ENCODE measurements at regions of chr16 and their contacts with region 1.

Region 1: DNA sequence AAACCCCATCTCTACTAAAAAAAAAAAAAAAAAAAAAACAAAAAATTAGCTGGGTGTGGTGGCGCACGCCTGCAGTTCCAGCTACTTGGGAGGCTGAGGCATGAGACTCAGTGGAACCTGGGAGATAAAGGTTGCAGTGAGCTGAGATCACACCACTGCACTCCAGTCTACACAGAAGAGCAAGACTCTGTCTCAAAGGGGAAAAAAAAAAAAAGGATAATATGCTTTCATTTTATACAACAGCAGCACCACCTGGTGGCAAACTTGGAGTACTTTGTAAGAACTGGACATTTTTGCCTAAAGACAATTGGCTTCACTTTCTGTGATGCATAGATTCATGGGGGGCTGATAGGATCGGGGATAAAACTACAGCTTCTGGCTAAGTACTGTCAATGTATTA is 8.5 kb downstream of the CHTF8 start:
- DNase-seq: no peak
- H3K4me3 ChIP-seq: no peak overlapping the region
- H3K27me3 ChIP-seq: no peaks in the 10 kb centered on the region
- CTCF ChIP-seq: peak; percentile 56

Region 2: GRCh38 chr16:68528686-68529379 is 595.1 kb before region 1 on chr16:
- CTCF ChIA-PET with region 1: interaction called, 19 read pairs
- POLR2A ChIA-PET with region 1: no interaction called
- DNase-seq: no peak
- H3K4me3 ChIP-seq: peak overlapping the region; percentile 19; the same call in 1 of the 2 replicates
- H3K27me3 ChIP-seq: no peaks in the 10 kb centered on the region
- CTCF ChIP-seq: peak; percentile 97

Region 3: DNA sequence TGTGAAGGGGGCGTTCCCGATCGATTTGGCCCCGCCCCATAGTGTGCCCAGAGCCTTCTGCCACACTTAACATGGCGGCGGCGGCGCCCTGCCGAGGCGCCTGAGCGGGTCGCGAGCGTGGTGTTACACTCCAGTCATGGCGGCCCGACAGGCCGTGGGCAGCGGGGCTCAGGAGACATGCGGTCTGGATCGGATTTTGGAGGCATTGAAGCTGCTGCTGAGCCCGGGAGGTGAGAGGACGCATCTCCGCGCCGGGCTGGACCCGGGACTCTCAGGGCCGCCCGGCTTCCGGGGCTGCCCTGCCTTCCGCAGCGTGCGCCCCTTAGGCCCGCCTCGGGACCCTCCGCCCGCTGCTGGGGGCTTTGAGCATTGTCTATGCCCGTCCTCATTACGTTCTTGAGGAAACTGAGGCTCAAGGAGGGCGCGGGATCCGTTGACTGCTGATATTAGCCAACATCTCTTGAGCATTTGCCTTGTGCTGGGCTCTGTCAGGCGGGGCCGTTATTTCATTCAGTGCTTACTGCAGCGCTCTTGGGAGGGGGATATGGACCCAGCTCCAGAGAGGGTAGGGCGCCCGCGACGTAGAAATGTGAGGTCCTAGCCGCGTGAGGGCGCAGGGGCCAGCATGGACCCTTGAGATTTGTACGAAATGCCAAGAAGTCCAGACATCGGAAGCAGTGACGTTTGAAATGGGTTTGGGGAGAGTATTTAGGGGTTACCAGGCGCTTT is 280.3 kb before region 1 on chr16 and contains the start of gene TANGO6:
- CTCF ChIA-PET with region 1: interaction called, 48 read pairs
- POLR2A ChIA-PET with region 1: no interaction called
- DNase-seq: peak; percentile 11
- H3K4me3 ChIP-seq: peak within 1 kb of the TSS; percentile 65
- H3K27me3 ChIP-seq: no peaks in the 10 kb centered on the region
- CTCF ChIP-seq: peak; percentile 47
- polyA plus RNA-seq, gene TANGO6: 13.0 and 14.6 TPM in 2 replicates

Region 4: GRCh38 chr16:68902008-68902968 is 221.6 kb before region 1 on chr16:
- CTCF ChIA-PET with region 1: interaction called, 146 read pairs
- POLR2A ChIA-PET with region 1: no interaction called
- DNase-seq: peak; percentile 25
- H3K4me3 ChIP-seq: no peak overlapping the region
- H3K27me3 ChIP-seq: no peaks in the 10 kb centered on the region
- CTCF ChIP-seq: peak; percentile 74

Region 5: DNA sequence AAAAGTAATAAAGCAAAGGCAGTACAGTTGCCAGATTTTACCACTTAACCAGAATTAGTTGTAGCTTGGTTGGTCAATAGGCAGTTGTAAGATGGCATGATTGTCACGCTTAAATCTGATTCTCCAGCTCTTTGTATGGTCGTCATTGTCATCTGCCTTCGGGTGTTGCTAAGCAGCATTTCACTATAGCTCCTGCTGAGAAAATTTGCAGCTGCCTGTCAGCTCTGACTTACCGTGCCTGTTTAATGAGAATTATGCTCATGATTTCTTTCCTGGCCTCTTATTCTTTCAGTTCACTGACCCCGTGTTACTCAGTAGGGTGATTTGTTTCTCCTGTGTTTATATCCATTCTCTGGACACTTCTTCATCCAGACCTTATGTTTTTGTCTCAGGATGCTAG is 213.9 kb before region 1 on chr16:
- CTCF ChIA-PET with region 1: interaction called, 146 read pairs
- POLR2A ChIA-PET with region 1: no interaction called
- DNase-seq: no peak
- H3K4me3 ChIP-seq: no peak overlapping the region
- H3K27me3 ChIP-seq: no peaks in the 10 kb centered on the region
- CTCF ChIP-seq: no peak

Region 6: DNA sequence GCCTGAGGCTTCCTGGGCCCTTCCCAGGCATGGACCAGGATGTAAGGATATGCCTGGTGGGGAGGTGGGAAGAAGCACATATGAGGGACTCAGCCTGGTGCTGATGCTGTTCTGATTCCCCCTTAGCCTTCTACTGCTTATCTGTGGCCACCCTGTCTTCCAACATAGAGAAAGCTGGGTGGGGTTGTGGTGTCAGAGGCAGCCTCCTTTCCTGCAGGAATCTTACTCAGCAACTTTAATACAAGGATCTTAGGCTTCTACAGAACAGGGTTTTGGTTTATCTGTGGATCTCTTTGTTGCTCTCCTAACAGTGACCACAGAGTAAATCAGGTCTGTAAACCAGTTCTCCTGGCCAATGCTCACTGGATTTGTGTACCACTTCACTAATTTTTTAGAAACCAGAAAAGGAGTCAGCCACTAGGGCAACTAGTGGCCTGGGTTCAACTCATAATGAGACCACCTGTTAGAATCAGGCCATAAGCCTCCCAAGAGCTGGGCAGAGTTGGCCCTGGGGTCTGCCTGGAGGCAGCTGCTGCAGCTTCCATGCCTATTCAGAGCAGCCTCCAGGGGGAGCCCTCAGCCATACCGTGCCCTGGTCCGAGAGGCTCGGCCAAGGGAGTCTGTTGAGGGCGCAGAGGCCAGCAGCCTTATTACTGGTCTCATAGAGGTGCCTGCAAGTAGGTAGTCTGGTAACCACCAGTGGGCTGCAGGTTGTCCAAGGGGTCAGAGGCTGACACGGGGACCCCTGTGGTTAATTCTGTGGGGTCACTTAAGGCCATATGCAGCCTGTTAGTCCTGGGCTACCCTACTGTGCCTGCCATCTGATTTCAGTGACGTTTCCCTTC is 11.4 kb before region 1 on chr16:
- CTCF ChIA-PET with region 1: interaction called, 34 read pairs
- POLR2A ChIA-PET with region 1: no interaction called
- DNase-seq: no peak
- H3K4me3 ChIP-seq: no peak overlapping the region
- H3K27me3 ChIP-seq: peaks cover 2% of the 10 kb centered on the region; the same call in 1 of the 2 replicates
- CTCF ChIP-seq: peak; percentile 79

Region 7: DNA sequence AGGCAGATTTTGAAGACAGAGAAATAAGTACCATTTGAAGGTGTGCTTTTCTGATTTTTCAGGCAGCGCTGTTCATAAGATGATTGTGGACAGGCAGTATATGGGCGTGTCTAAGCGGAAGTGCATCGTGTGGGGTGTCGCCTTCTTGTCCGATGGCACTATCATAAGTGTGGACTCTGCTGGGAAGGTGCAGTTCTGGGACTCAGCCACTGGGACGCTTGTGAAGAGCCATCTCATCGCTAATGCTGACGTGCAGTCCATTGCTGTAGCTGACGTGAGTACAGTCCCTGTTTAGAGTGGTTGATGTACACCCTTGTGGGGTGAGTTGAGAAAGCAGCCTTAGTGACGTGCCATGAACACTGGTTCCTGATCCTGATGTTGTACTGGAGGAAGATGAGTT is 19.2 kb after region 1 on chr16:
- CTCF ChIA-PET with region 1: no interaction called
- POLR2A ChIA-PET with region 1: no interaction called
- DNase-seq: no peak
- H3K4me3 ChIP-seq: no peak overlapping the region
- H3K27me3 ChIP-seq: no peaks in the 10 kb centered on the region
- CTCF ChIP-seq: no peak